CD8-positive, alpha-beta memory T cell (primary cell): ENCODE measurements at regions of chr19 and their contacts with region 1.

Region 1: DNA sequence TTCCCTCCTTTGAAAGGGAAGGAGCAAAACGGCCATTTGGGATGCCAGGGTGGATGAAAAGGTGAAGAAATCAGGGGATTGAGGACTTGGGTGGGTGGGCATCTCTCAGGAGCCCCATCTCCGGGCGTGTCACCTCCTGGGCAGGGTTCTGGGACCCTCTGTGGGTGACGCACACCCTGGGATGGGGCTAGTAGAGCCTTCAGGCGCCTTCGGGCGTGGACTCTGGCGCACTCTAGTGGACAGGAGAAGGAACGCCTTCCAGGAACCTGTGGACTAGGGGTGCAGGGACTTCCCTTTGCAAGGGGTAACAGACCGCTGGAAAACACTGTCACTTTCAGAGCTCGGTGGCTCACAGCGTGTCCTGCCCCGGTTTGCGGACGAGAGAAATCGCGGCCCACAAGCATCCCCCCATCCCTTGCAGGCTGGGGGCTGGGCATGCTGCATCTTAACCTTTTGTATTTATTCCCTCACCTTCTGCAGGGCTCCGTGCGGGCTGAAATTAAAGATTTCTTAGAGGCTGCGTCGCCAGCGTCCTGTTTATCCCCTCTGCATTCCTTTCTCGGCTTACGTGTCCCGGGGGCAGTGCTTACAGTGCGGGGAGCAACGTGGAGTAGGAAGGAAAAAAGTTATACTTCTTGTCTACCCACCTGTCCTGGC is 15.2 kb upstream of the S1PR4 start:
- DNase-seq: peak; percentile 57 to 80 (median 61)
- H3K4me3 ChIP-seq: no peak overlapping the region
- H3K4me3 Mint-ChIP-seq: peak overlapping the region in 3 of 7 donors; percentile 8 to 68 (median 35)
- H3K27ac ChIP-seq: no peak overlapping the region
- H3K27ac Mint-ChIP-seq: peak overlapping the region in 7 of 8 donors; percentile 5 to 83 (median 57)
- H3K4me1 ChIP-seq: peaks cover 8% of the 10 kb centered on the region
- H3K4me1 Mint-ChIP-seq: peaks cover 12 to 13% (median 12%) of the 10 kb centered on the region in 3 donors
- H3K27me3 ChIP-seq: no peaks in the 10 kb centered on the region
- H3K27me3 Mint-ChIP-seq: no peaks in the 10 kb centered on the region

Region 2: GRCh38 chr19:3125900-3126524 is 37.3 kb before region 1 on chr19:
- CTCF ChIA-PET with region 1: interaction called, 33 read pairs
- POLR2A ChIA-PET with region 1: no interaction called
- DNase-seq: peak; percentile 58 to 66 (median 63)
- H3K4me3 ChIP-seq: no peak overlapping the region
- H3K4me3 Mint-ChIP-seq: no peak overlapping the region
- H3K27ac ChIP-seq: no peak overlapping the region
- H3K27ac Mint-ChIP-seq: no peak overlapping the region
- H3K4me1 ChIP-seq: no peaks in the 10 kb centered on the region
- H3K4me1 Mint-ChIP-seq: peaks cover 0 to 5% (median 4%) of the 10 kb centered on the region in 3 donors
- H3K27me3 ChIP-seq: no peaks in the 10 kb centered on the region
- H3K27me3 Mint-ChIP-seq: peaks cover 0 to 6% of the 10 kb centered on the region in 2 donors

Region 3: DNA sequence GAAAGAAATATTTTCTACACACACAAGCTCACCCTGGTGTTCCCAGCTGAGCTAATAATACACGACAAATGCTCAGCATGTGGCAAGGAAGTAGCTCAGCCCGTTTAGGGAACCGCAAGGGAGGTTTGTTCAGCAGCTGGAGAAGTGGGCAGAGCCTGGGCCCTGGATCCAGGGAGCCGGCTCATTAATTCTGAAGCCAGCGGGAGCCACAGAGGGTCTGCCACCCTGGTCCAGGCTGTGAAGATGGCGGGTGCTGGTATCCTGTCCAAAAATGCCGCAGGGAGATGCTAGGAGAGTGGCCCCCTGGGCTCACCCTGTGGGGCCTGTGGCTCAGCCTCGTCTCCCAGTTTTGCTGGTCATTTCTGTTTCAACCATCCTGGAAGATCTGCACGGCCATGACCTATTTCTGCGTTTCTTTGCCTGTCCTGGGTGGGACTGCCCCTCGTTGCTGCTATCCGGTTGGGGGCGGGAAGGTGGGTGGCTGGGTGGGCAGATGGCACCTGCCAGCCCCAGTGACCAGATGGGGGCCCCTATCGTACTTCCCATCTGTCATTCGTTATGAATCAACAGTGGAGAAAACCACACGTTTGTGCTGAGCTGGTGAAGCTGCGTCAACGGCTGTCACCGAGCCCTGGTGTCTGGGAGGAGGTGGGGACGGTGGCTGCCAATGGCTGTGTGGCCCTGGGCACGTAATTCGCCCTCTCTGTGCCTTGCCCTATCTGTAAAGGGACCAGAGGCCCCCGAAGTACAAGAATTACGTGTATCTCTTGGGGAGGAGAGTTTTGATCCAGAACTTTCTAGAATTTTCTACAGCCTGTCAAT is 30.2 kb before region 1 on chr19:
- CTCF ChIA-PET with region 1: interaction called, 33 read pairs
- POLR2A ChIA-PET with region 1: no interaction called
- DNase-seq: peak; percentile 57 to 84 (median 77)
- H3K4me3 ChIP-seq: peak overlapping the region; percentile 20
- H3K4me3 Mint-ChIP-seq: peak overlapping the region; percentile 10 to 80 (median 74)
- H3K27ac ChIP-seq: peak overlapping the region; percentile 29
- H3K27ac Mint-ChIP-seq: peak overlapping the region; percentile 72 to 99 (median 95)
- H3K4me1 ChIP-seq: peaks cover 15% of the 10 kb centered on the region
- H3K4me1 Mint-ChIP-seq: peaks cover 20 to 31% (median 21%) of the 10 kb centered on the region in 3 donors
- H3K27me3 ChIP-seq: peaks cover 3% of the 10 kb centered on the region
- H3K27me3 Mint-ChIP-seq: peaks cover 3 to 11% of the 10 kb centered on the region in 2 donors

Region 4: DNA sequence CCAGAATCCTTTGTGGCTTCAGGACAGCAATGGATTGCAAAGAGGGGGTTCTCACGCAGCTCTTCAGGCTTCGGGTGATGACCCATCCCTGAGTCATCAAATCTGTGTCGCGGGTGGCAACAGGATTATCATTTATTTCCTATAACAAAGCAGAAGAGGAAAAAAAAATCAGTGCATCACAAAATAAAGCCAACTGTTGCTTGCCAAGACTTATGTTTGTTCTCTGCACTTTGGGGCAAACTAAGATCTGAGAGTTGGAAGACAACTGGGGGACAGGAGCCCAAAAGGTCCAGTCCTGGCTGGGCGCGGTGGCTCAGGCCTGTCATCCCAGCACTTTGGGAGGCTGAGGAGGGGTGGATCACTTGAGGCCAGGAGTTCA is 21.1 kb before region 1 on chr19:
- CTCF ChIA-PET with region 1: interaction called, 20 read pairs
- POLR2A ChIA-PET with region 1: no interaction called
- DNase-seq: no peak
- H3K4me3 ChIP-seq: no peak overlapping the region
- H3K4me3 Mint-ChIP-seq: no peak overlapping the region
- H3K27ac ChIP-seq: no peak overlapping the region
- H3K27ac Mint-ChIP-seq: peak overlapping the region in 7 of 8 donors; percentile 46 to 88 (median 72)
- H3K4me1 ChIP-seq: no peaks in the 10 kb centered on the region
- H3K4me1 Mint-ChIP-seq: peaks cover 4 to 13% (median 9%) of the 10 kb centered on the region in 3 donors
- H3K27me3 ChIP-seq: no peaks in the 10 kb centered on the region
- H3K27me3 Mint-ChIP-seq: no peaks in the 10 kb centered on the region